Prostate gland (tissue), 2 donors: ENCODE measurements at regions of chrX and their contacts with region 1.

Region 1: DNA sequence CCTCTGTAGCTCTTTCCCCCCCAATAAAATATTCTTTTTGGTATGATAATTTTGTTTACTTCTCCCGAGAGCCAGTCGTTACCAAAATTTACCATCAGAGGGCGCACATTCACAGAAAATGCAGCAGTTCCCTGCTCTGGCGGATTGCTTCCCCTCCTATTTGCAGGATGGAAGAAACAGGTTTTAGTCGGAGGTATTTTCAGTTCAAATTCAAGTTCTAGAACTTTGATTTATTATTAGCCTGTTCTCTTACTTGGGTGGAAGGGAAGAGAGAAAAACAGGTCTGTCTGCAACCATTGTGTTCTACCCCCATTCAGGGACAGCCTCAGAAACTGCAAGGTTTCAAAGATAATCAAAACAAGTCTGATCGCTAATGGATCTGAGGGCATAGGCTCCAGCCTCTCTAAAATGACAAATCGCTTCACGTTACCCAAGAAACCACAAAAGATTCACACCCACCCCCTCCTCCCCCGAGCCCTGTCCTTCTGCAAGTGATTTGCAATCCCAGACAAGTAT is 263.8 kb upstream of the RPS6KA3 start:
- DNase-seq: peak; percentile 32
- H3K4me3 ChIP-seq: no peak overlapping the region
- H3K27ac ChIP-seq: no peak overlapping the region
- H3K4me1 ChIP-seq: no peaks in the 10 kb centered on the region
- H3K27me3 ChIP-seq: no peaks in the 10 kb centered on the region
- CTCF ChIP-seq: peak; percentile 14 to 58 (median 54)
- POLR2A ChIP-seq: no peak

Region 2: GRCh38 chrX:20571611-20572010 is 41.1 kb after region 1 on chrX:
- intact Hi-C with region 1: no loop called
- DNase-seq: no peak
- H3K4me3 ChIP-seq: no peak overlapping the region
- H3K27ac ChIP-seq: no peak overlapping the region
- H3K4me1 ChIP-seq: no peaks in the 10 kb centered on the region
- H3K27me3 ChIP-seq: no peaks in the 10 kb centered on the region
- CTCF ChIP-seq: no peak
- POLR2A ChIP-seq: no peak

Region 3: DNA sequence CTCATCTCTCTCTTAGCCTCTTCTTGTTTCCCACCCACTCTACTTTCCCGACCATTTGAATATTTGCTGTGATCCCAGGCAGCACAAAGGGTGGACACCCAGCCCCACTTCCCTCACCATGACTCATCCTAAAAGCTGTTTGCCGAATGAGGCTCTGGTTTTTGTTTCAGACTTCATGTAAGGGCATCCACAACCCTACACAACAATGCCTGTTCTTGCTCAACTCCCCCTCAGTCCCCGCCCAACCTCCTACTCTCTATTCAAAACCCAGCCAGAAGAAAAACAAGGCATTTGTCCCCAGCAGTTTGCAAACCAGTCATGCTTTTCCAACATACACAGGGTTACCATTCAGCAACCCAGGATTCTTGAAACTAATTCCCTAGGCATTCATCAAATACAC is 327.3 kb after region 1 on chrX:
- intact Hi-C with region 1: no loop called
- DNase-seq: no peak
- H3K4me3 ChIP-seq: no peak overlapping the region
- H3K27ac ChIP-seq: no peak overlapping the region
- H3K4me1 ChIP-seq: no peaks in the 10 kb centered on the region
- H3K27me3 ChIP-seq: no peaks in the 10 kb centered on the region
- CTCF ChIP-seq: no peak
- POLR2A ChIP-seq: no peak

Region 4: GRCh38 chrX:21479695-21480270 is 949.3 kb after region 1 on chrX:
- intact Hi-C with region 1: loop called (anchors 5 kb)
- DNase-seq: no peak
- H3K4me3 ChIP-seq: no peak overlapping the region
- H3K27ac ChIP-seq: no peak overlapping the region
- H3K4me1 ChIP-seq: no peaks in the 10 kb centered on the region
- H3K27me3 ChIP-seq: no peaks in the 10 kb centered on the region
- CTCF ChIP-seq: peak in 3 of 4 experiments; percentile 19 to 44 (median 37)
- POLR2A ChIP-seq: no peak

Region 5: GRCh38 chrX:21745756-21746155 is 1215.3 kb after region 1 on chrX:
- intact Hi-C with region 1: loop called (anchors 10 kb)
- DNase-seq: no peak
- H3K4me3 ChIP-seq: no peak overlapping the region
- H3K27ac ChIP-seq: no peak overlapping the region
- H3K4me1 ChIP-seq: no peaks in the 10 kb centered on the region
- H3K27me3 ChIP-seq: no peaks in the 10 kb centered on the region
- CTCF ChIP-seq: peak in 2 of 4 experiments; percentile 27 to 32
- POLR2A ChIP-seq: no peak

Region 6: DNA sequence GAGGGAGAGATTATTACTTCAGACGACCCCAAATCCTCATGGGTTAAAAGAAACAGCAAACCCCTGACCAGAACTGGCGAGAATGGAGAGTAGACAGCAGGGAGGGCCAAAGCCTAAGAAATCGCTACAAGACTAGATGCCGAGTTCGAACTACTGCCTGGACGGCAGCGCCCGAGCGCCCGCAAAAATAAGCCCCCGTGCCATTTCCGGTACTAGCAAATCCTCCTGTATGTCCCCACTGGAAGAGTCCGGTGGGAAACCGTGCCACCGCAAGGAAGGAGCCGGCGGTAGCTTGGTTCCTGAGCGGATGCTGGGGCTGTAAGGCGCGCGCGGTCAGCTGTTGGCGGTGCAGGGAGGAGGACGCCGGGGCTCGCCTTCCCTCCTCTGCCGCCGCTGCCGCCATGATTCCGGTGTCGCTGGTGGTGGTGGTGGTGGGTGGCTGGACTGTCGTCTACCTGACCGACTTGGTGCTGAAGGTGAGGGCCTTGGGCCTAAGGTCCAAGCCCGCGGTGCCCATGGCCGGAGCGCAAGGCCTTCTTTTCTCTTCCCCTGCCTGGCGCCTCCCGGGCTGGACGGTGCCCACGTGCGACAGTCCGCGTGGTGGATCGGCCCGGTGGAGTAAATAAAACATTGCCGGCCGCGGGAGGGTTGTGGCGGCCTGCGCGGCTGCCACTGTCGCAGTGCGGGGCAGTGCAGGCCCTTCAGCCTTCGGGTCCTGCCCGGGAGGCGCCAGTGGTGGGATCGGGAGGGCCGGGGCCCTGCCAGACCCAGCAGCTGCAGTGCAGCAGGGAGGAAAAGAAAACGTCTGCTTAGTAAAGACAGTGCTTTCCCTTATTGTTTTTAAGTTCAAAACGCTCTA is 1309.1 kb after region 1 on chrX and contains the start of gene MBTPS2:
- intact Hi-C with region 1: loop called (anchors 10 kb)
- DNase-seq: peak; percentile 70
- H3K4me3 ChIP-seq: peak within 1 kb of the TSS; percentile 56 to 57
- H3K27ac ChIP-seq: peak within 1 kb of the TSS; percentile 78 to 79
- H3K4me1 ChIP-seq: no peaks in the 10 kb centered on the region
- H3K27me3 ChIP-seq: no peaks in the 10 kb centered on the region
- CTCF ChIP-seq: peak in 3 of 4 experiments; percentile 11 to 40 (median 19)
- POLR2A ChIP-seq: peak; percentile 29
- total RNA-seq, gene MBTPS2: 14.0 to 14.4 TPM